ENCODE measurements at regions of chr5 and their contacts with region 1.

Region 1: GRCh38 chr5:72138943-72139521 is 31.8 kb downstream of the MAP1B start:
- DNase-seq: no peak
- CTCF ChIP-seq: no peak

Region 2: DNA sequence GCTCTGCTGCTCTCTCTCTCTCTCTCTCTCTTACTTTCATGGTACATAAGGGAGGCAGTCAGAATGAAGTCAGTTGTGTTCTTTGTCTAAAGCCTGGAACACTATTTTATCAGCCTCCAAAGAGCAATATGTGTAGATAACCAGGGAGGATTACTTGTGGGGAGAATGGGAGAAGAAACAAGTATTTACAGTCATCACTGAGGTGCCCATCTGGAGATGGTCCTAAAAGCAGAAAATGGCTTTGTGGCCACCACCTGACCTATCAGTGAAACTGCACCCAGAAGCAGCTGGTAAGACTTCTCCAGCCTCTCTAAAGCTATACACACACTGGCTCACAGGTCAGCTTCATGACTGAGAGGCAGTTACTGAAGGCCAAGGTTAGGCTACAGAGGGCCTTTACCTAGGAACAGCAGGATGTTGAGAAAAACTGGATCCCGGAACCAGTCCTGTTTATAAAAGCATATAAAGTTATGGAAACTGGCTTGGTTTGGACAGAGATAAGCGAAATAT is 105.9 kb after region 1 on chr5:
- in situ Hi-C with region 1: loop called (anchors 10 kb)
- DNase-seq: peak; percentile 22
- CTCF ChIP-seq: peak; percentile 52

Region 3: DNA sequence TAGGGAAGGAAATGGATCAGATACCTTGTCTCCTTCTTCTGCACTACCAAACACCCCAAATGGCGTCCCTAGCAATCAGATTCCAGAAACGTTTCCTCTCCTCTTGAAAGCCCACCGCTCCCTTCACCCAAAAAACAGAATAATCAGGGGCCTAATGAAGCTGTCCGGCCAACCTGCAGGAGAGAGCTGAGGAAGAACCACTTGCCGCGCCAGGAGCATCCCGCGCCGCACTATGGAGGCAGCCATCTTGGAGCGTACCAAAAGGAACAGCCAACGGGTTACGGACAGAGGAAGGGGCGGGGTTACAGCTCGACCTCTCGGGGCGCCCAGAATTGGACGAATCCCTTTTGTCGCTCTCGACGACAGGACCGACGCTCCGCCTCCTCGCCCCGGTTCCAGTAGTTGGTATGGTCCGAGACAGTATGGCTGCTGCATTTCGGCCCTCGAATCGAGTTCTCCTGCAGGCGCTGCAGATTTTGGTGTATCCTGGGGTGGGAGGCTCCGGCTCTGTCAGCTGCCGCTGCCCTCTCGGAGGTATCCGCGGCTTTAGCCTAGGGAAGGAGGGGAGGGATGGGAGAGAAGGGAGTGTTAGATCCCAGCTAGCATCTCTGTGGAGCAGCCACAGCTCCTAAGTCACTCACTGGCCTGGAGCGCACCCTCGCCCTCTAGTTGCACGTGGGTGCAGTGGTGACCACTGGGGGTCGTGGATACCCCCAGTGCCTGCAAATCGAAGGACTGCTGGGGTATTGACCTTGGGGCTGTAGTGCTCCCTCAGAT is 181.1 kb after region 1 on chr5 and contains the starts of genes MRPS27 and PTCD2:
- in situ Hi-C with region 1: no loop called
- DNase-seq: peak; percentile 97
- CTCF ChIP-seq: peak; percentile 42